GM12878 (cell line): ENCODE measurements at regions of chr13 and their contacts with region 1.

Region 1: GRCh38 chr13:51412431-51412830 is 40.4 kb downstream of the INTS6 start:
- DNase-seq: no peak
- ATAC-seq: no peak
- H3K4me3 ChIP-seq: no peak overlapping the region
- H3K27ac ChIP-seq: no peak overlapping the region
- H3K4me1 ChIP-seq: peaks cover 13% of the 10 kb centered on the region; the same call in 1 of the 2 replicates
- H3K27me3 ChIP-seq: no peaks in the 10 kb centered on the region
- CTCF ChIP-seq: no peak
- EP300 ChIP-seq: no peak
- POLR2A ChIP-seq: no peak
- RAD21 ChIP-seq: no peak

Region 2: DNA sequence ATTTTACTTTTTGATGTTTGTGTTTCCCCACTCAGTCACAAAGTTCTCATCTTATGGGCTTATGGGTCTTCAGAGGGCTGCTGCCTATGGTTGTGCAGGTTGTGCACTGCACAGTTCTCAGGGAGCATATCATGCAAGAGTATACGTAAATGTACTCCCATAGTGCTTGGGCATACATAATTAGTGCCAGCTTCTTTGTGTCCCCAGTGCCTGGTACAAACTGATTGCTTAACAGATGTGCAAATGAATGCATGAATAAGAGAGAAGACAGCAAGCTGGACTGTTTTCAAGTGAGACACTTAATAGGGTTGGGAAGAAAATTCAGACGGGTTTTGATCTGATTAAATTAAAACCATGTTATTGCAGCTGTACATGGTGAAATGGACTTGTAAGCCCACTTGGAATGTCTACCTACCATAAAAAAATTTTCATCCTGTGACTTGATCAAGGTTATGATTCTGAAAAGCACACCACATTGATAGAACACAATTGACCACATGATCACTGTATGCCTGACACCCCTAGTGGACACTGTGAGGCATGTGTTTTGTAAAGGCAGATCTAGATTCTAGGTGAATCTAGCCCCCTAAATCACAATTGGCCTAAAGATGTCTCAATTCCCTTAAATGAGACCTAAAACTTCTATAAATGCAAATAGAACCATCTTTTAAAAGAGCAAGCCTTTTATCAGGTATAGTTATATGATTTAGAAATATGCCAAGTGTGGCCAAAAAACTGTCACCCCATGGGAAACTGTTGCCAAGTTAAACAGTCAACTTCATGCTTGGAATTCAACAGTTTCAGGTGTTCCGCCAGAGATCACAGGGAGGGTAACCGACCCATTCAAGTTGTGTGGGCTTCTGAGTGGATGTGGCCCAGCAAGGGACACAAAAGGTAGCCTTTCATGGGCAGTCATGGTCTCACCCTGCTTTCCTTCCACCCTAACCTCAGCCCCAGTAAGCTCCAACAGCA is 162.4 kb before region 1 on chr13:
- CTCF ChIA-PET with region 1: no interaction called
- POLR2A ChIA-PET with region 1: no interaction called
- RAD21 ChIA-PET with region 1: no interaction called
- SMC1A ChIA-PET with region 1: no interaction called
- in situ Hi-C with region 1: no loop called
- intact Hi-C with region 1: no loop called
- DNase-seq: no peak
- ATAC-seq: peak; percentile 81
- H3K4me3 ChIP-seq: no peak overlapping the region
- H3K27ac ChIP-seq: no peak overlapping the region
- H3K4me1 ChIP-seq: peaks cover 3% of the 10 kb centered on the region; the same call in 1 of the 2 replicates
- H3K27me3 ChIP-seq: peaks cover 0 to 2% of the 10 kb centered on the region in 2 experiments; a peak in 1 of 4 replicates
- CTCF ChIP-seq: peak; percentile 27 to 59 (median 57); a peak in 5 of 6 replicates
- EP300 ChIP-seq: no peak
- POLR2A ChIP-seq: no peak
- RAD21 ChIP-seq: no peak

Region 3: GRCh38 chr13:51396352-51396751 is 16.1 kb before region 1 on chr13:
- CTCF ChIA-PET with region 1: interaction called, 7 read pairs
- POLR2A ChIA-PET with region 1: no interaction called
- RAD21 ChIA-PET with region 1: interaction called, 4 read pairs
- SMC1A ChIA-PET with region 1: interaction called, 10 read pairs
- in situ Hi-C with region 1: no loop called
- intact Hi-C with region 1: no loop called
- DNase-seq: no peak
- ATAC-seq: peak; percentile 95
- H3K4me3 ChIP-seq: no peak overlapping the region
- H3K27ac ChIP-seq: no peak overlapping the region
- H3K4me1 ChIP-seq: no peaks in the 10 kb centered on the region; the same call in 1 of the 2 replicates
- H3K27me3 ChIP-seq: no peaks in the 10 kb centered on the region
- CTCF ChIP-seq: no peak
- EP300 ChIP-seq: no peak; a peak in 1 of 4 replicates
- POLR2A ChIP-seq: no peak
- RAD21 ChIP-seq: no peak

Region 4: GRCh38 chr13:51759240-51759639 is 346.8 kb after region 1 on chr13:
- CTCF ChIA-PET with region 1: no interaction called
- POLR2A ChIA-PET with region 1: no interaction called
- RAD21 ChIA-PET with region 1: no interaction called
- SMC1A ChIA-PET with region 1: no interaction called
- in situ Hi-C with region 1: no loop called
- intact Hi-C with region 1: no loop called
- DNase-seq: no peak
- ATAC-seq: no peak
- H3K4me3 ChIP-seq: no peak overlapping the region
- H3K27ac ChIP-seq: no peak overlapping the region
- H3K4me1 ChIP-seq: peaks cover 10% of the 10 kb centered on the region
- H3K27me3 ChIP-seq: no peaks in the 10 kb centered on the region
- CTCF ChIP-seq: no peak
- EP300 ChIP-seq: no peak
- POLR2A ChIP-seq: no peak
- RAD21 ChIP-seq: no peak